ENCODE measurements at regions of chr13 and their contacts with region 1.

Region 1: GRCh38 chr13:113796948-113797676 is 38.1 kb downstream of the TMEM255B start:
- DNase-seq: no peak
- H3K4me3 ChIP-seq: no peak overlapping the region
- H3K27ac ChIP-seq: no peak overlapping the region
- H3K4me1 ChIP-seq: no peaks in the 10 kb centered on the region
- H3K27me3 ChIP-seq: no peaks in the 10 kb centered on the region
- CTCF ChIP-seq: no peak

Region 2: GRCh38 chr13:113746143-113746525 is 51.0 kb before region 1 on chr13:
- CTCF ChIA-PET with region 1: no interaction called
- dilution Hi-C with region 1: loop called (anchors 5 kb)
- in situ Hi-C with region 1: no loop called
- intact Hi-C with region 1: no loop called
- DNase-seq: no peak
- H3K4me3 ChIP-seq: no peak overlapping the region
- H3K27ac ChIP-seq: no peak overlapping the region
- H3K4me1 ChIP-seq: peaks cover 12% of the 10 kb centered on the region
- H3K27me3 ChIP-seq: no peaks in the 10 kb centered on the region
- CTCF ChIP-seq: no peak

Region 3: GRCh38 chr13:113758651-113759524 is 38.2 kb before region 1 on chr13 and contains the start of gene TMEM255B:
- CTCF ChIA-PET with region 1: no interaction called
- dilution Hi-C with region 1: no loop called
- in situ Hi-C with region 1: no loop called
- intact Hi-C with region 1: loop called (anchors 5 kb)
- DNase-seq: peak; percentile 65
- H3K4me3 ChIP-seq: peak within 1 kb of the TSS; percentile 52 to 94 (median 69)
- H3K27ac ChIP-seq: peak within 1 kb of the TSS; percentile 41
- H3K4me1 ChIP-seq: peaks cover 11% of the 10 kb centered on the region
- H3K27me3 ChIP-seq: no peaks in the 10 kb centered on the region
- CTCF ChIP-seq: no peak
- total RNA-seq, gene TMEM255B: 4.2 to 19.0 TPM

Region 4: DNA sequence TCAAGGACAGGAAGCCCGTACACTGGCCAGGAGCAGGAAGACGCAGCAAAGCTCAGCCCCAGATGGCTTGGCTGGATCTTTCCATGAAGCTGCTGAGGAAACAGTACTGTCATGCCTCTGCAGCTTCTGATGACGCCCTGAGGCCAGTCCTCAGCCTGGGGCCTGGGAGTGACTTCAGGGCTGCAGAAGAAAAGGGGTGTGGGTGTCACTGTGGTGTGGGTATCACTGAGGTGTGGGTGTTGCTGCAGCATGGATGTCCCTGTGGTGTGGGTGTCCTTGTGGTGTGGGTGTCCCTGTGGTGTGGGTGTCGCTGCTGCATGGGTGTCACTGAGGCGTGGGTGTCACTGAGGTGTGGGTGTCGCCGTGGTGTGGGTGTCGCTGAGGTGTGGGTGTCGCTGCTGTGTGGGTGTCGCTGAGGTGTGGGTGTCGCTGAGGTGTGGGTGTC is 78.7 kb after region 1 on chr13:
- CTCF ChIA-PET with region 1: no interaction called
- dilution Hi-C with region 1: loop called (anchors 5 kb)
- in situ Hi-C with region 1: no loop called
- intact Hi-C with region 1: no loop called
- DNase-seq: no peak
- H3K4me3 ChIP-seq: no peak overlapping the region
- H3K27ac ChIP-seq: no peak overlapping the region
- H3K4me1 ChIP-seq: no peaks in the 10 kb centered on the region
- H3K27me3 ChIP-seq: no peaks in the 10 kb centered on the region
- CTCF ChIP-seq: no peak